Caco-2 (cell line): ENCODE measurements at regions of chr6 and their contacts with region 1.

Region 1: GRCh38 chr6:124870611-124871459 is 91.4 kb upstream of the RNF217 start:
- DNase-seq: peak in 1 of 2 experiments; percentile 3
- H3K4me3 ChIP-seq: no peak overlapping the region
- H3K4me3 Mint-ChIP-seq: no peak overlapping the region
- H3K27ac Mint-ChIP-seq: no peak overlapping the region
- H3K4me1 ChIP-seq: no peaks in the 10 kb centered on the region
- H3K4me1 Mint-ChIP-seq: no peaks in the 10 kb centered on the region
- H3K27me3 ChIP-seq: no peaks in the 10 kb centered on the region
- H3K27me3 Mint-ChIP-seq: peaks cover 4% of the 10 kb centered on the region
- CTCF ChIP-seq: peak; percentile 50 to 54

Region 2: DNA sequence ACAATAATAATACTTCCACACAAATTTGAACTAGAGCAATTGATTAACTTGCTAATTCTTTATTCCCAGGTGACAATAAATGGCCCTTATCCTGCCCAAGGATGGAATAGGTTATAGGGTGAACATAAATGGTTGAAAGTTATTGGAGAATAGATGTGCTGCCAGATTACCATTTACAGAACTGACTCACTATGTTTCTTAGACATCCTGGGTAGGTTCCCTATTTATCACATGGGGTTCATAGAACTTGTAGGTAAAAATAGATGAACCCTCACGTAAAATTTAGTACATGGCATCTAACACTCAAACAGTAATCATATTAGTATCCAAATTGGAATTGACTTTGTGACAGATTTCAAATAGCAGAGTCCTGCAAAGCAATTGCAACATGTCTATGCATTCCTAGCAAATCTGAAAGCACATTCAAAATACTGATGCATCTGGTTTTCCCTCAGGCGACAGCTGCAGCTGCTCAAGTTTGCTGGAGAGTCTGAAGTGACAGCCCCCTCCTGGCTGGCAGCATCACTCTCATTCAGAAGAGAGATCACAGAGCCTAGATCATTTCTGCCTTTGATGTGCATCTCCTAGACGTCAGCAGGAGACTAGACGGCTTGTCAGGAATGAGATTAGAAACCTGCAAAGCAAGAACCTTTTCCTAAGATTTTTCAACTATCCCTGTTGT is 11.2 kb after region 1 on chr6:
- CTCF ChIA-PET with region 1: no interaction called
- POLR2A ChIA-PET with region 1: no interaction called
- intact Hi-C with region 1: no loop called
- DNase-seq: peak in 1 of 2 experiments; percentile 2
- H3K4me3 ChIP-seq: no peak overlapping the region
- H3K4me3 Mint-ChIP-seq: no peak overlapping the region
- H3K27ac Mint-ChIP-seq: no peak overlapping the region
- H3K4me1 ChIP-seq: no peaks in the 10 kb centered on the region
- H3K4me1 Mint-ChIP-seq: no peaks in the 10 kb centered on the region
- H3K27me3 ChIP-seq: no peaks in the 10 kb centered on the region
- H3K27me3 Mint-ChIP-seq: peaks cover 7% of the 10 kb centered on the region
- CTCF ChIP-seq: no peak

Region 3: DNA sequence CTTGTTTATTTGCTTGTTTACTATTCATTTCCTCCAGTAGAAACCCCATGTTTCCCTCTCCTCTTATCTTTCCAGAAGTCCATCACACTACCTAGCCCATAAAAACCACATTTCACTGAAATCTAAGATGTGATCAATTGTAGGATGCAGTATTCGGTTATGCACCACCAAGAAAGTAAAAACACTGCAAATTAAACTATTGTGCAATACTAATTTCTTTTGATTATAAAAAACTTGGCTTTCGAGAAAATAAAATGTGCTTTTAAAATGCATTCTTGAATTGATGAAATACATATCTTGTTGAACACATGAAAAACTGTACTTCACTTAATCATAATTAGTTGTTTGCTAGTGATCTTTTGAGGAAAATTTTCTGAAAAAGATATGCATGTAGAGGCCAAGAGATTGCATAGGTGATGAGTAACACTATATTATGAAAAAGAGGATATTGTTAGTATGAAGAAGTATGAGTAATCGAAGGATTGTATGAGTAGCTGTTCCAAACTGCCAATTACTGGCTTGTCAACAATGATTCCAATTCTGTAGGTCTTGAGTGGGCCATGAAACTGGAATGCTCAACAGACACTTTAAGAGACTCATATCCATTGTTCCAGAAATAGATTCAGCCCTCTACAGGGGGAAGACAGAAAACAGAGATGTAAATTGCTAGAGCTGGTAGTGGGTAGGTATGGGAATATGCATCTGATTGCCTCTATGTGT is 171.1 kb after region 1 on chr6:
- CTCF ChIA-PET with region 1: no interaction called
- POLR2A ChIA-PET with region 1: no interaction called
- intact Hi-C with region 1: no loop called
- DNase-seq: no peak
- H3K4me3 ChIP-seq: no peak overlapping the region
- H3K4me3 Mint-ChIP-seq: no peak overlapping the region
- H3K27ac Mint-ChIP-seq: no peak overlapping the region
- H3K4me1 ChIP-seq: no peaks in the 10 kb centered on the region
- H3K4me1 Mint-ChIP-seq: no peaks in the 10 kb centered on the region
- H3K27me3 ChIP-seq: no peaks in the 10 kb centered on the region
- H3K27me3 Mint-ChIP-seq: peaks cover 3% of the 10 kb centered on the region
- CTCF ChIP-seq: no peak

Region 4: GRCh38 chr6:125114248-125114858 is 243.5 kb after region 1 on chr6:
- CTCF ChIA-PET with region 1: no interaction called
- POLR2A ChIA-PET with region 1: no interaction called
- intact Hi-C with region 1: loop called (anchors 1 kb)
- DNase-seq: peak in 1 of 2 experiments; percentile 30
- H3K4me3 ChIP-seq: no peak overlapping the region
- H3K4me3 Mint-ChIP-seq: no peak overlapping the region
- H3K27ac Mint-ChIP-seq: no peak overlapping the region
- H3K4me1 ChIP-seq: no peaks in the 10 kb centered on the region
- H3K4me1 Mint-ChIP-seq: no peaks in the 10 kb centered on the region
- H3K27me3 ChIP-seq: no peaks in the 10 kb centered on the region
- H3K27me3 Mint-ChIP-seq: peaks cover 5% of the 10 kb centered on the region
- CTCF ChIP-seq: peak; percentile 53 to 63

Region 5: GRCh38 chr6:125749173-125749864 is 878.5 kb after region 1 on chr6 and contains the start of gene HEY2:
- CTCF ChIA-PET with region 1: no interaction called
- POLR2A ChIA-PET with region 1: no interaction called
- intact Hi-C with region 1: loop called (anchors 10 kb)
- DNase-seq: peak; percentile 86 to 96
- H3K4me3 ChIP-seq: peak within 1 kb of the TSS; percentile 48
- H3K4me3 Mint-ChIP-seq: peak within 1 kb of the TSS; percentile 93
- H3K27ac Mint-ChIP-seq: no peak within 1 kb of the TSS
- H3K4me1 ChIP-seq: peaks cover 11% of the 10 kb centered on the region; the same call in 1 of the 2 replicates
- H3K4me1 Mint-ChIP-seq: peaks cover 22% of the 10 kb centered on the region
- H3K27me3 ChIP-seq: no peaks in the 10 kb centered on the region; the same call in none of the 2 replicates
- H3K27me3 Mint-ChIP-seq: peaks cover 33% of the 10 kb centered on the region
- CTCF ChIP-seq: no peak
- total RNA-seq, gene HEY2: 0.12 TPM in 1 of 2 replicates, not detected in the other